ENCODE measurements at regions of chrX and their contacts with region 1.

Region 1: DNA sequence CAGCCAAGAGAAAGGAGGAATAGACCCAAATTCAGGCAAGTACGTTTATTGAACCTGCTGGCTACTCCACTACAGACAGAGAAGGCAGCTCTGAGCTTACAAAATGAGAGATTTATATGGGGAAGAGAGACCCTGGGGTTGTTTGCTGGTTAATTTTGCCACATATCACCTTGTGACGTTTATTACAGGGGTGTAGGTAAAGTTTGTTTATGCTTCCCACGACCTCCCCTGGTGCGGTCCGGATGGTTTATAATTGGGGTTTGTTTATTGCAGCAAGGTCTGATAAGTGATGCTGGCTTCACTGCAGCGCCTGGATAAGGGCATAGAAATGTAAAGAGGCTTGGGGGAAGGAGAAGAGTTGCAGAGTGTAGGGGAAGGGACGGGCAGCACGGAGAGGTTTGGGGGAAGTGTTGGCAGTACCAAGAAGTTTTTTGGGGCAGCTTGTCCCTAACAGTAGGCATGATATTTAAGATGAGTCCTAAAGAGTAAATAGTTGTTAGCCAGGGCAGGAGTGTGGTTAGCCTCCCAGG is 12.6 kb downstream of the BEX1 start:
- DNase-seq: no peak
- H3K4me3 ChIP-seq: no peak overlapping the region
- H3K27ac ChIP-seq: no peak overlapping the region
- H3K4me1 ChIP-seq: no peaks in the 10 kb centered on the region
- H3K27me3 ChIP-seq: no peaks in the 10 kb centered on the region
- CTCF ChIP-seq: no peak
- EP300 ChIP-seq: no peak
- POLR2A ChIP-seq: no peak

Region 2: DNA sequence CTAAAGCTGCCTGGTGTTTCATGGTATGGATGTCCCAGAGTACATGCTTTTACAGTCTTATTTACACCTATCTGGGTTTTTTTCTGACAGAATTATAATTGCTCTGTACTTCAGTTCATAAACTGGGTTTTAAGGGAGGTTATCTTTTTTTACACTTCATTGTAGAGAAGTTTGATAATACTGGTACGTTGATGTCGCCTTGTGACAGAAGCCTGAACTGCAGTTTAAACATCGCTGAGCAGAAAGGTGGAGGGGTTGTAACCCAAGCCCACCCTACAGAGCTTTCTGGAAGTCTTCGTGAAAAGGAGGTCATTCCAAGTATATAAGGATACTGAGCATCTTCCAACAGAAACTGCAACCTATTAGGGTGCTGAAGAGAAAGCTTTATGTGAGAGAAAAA is 33.8 kb before region 1 on chrX:
- intact Hi-C with region 1: no loop called
- DNase-seq: no peak
- H3K4me3 ChIP-seq: no peak overlapping the region
- H3K27ac ChIP-seq: no peak overlapping the region
- H3K4me1 ChIP-seq: no peaks in the 10 kb centered on the region
- H3K27me3 ChIP-seq: no peaks in the 10 kb centered on the region
- CTCF ChIP-seq: no peak
- EP300 ChIP-seq: no peak
- POLR2A ChIP-seq: no peak

Region 3: GRCh38 chrX:103107836-103108235 is 56.5 kb after region 1 on chrX:
- intact Hi-C with region 1: no loop called
- DNase-seq: no peak
- H3K4me3 ChIP-seq: no peak overlapping the region
- H3K27ac ChIP-seq: no peak overlapping the region
- H3K4me1 ChIP-seq: no peaks in the 10 kb centered on the region
- H3K27me3 ChIP-seq: no peaks in the 10 kb centered on the region
- CTCF ChIP-seq: no peak
- EP300 ChIP-seq: no peak
- POLR2A ChIP-seq: no peak

Region 4: GRCh38 chrX:103211012-103211715 is 159.8 kb after region 1 on chrX:
- intact Hi-C with region 1: no loop called
- DNase-seq: peak in 4 of 5 donors; percentile 18 to 45 (median 28)
- H3K4me3 ChIP-seq: no peak overlapping the region
- H3K27ac ChIP-seq: no peak overlapping the region
- H3K4me1 ChIP-seq: no peaks in the 10 kb centered on the region
- H3K27me3 ChIP-seq: no peaks in the 10 kb centered on the region
- CTCF ChIP-seq: no peak
- EP300 ChIP-seq: no peak
- POLR2A ChIP-seq: no peak

Region 5: GRCh38 chrX:104538336-104538735 is 1487.0 kb after region 1 on chrX:
- intact Hi-C with region 1: loop called in 1 of 4 experiments (anchors 5 kb)
- DNase-seq: no peak
- H3K4me3 ChIP-seq: no peak overlapping the region
- H3K27ac ChIP-seq: no peak overlapping the region
- H3K4me1 ChIP-seq: no peaks in the 10 kb centered on the region
- H3K27me3 ChIP-seq: no peaks in the 10 kb centered on the region
- CTCF ChIP-seq: no peak
- EP300 ChIP-seq: no peak
- POLR2A ChIP-seq: no peak